ENCODE measurements at regions of chr1 and their contacts with region 1.

Region 1: DNA sequence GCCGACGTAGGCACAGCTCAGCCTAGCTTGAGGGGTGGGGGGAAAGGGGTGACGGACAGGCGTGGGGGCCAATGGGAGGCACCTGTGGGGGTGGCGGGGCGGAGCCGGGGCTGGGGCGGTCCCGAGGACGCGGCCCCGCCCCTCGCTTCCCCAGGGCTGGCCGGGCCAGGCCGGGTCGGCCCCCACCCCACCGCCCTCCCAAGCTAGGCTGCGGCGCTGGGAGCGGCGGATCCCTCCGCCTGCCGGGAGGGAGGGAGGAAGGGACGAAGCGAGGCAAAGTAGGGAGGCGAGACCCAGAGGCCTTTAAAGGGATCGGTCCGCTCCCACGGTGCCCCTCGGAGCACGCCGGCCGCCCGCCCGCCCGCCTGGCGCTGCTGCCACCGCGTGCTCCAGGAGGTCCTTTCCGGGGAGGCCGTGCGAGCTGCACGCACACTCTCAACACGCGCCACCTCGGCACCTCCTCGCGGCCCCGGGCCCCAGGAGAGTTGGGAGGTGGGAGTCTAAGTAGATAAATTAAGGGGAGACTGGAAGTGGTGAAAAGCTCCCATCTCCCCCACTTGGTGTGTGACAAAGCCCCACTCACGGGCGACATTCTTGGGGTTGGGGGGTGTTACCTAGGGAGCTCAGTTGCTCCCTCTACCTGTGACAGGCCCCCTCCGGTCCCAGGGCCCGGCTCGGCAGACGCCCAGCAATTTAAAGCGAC is 373 bp upstream of the MEF2D start:
- DNase-seq: peak; percentile 95 to 97 (median 96)
- H3K4me3 ChIP-seq: peak overlapping the region in 2 of 4 donors; percentile 97 to 99
- H3K27ac ChIP-seq: peak overlapping the region; percentile 99 to 100 (median 100)
- H3K4me1 ChIP-seq: peaks cover 73 to 74% of the 10 kb centered on the region in 2 donors
- H3K27me3 ChIP-seq: no peaks in the 10 kb centered on the region
- CTCF ChIP-seq: peak in 5 of 6 experiments; percentile 14 to 48 (median 39)
- POLR2A ChIP-seq: peak; percentile 90 to 98

Region 2: GRCh38 chr1:156136970-156137483 is 363.9 kb before region 1 on chr1:
- intact Hi-C with region 1: no loop called
- DNase-seq: peak in 1 of 7 donors; percentile 21
- H3K4me3 ChIP-seq: no peak overlapping the region
- H3K27ac ChIP-seq: no peak overlapping the region
- H3K4me1 ChIP-seq: no peaks in the 10 kb centered on the region
- H3K27me3 ChIP-seq: no peaks in the 10 kb centered on the region
- CTCF ChIP-seq: no peak
- POLR2A ChIP-seq: no peak

Region 3: GRCh38 chr1:156233426-156234127 is 267.4 kb before region 1 on chr1:
- intact Hi-C with region 1: no loop called
- DNase-seq: no peak
- H3K4me3 ChIP-seq: no peak overlapping the region
- H3K27ac ChIP-seq: no peak overlapping the region
- H3K4me1 ChIP-seq: no peaks in the 10 kb centered on the region
- H3K27me3 ChIP-seq: no peaks in the 10 kb centered on the region
- CTCF ChIP-seq: no peak
- POLR2A ChIP-seq: no peak

Region 4: DNA sequence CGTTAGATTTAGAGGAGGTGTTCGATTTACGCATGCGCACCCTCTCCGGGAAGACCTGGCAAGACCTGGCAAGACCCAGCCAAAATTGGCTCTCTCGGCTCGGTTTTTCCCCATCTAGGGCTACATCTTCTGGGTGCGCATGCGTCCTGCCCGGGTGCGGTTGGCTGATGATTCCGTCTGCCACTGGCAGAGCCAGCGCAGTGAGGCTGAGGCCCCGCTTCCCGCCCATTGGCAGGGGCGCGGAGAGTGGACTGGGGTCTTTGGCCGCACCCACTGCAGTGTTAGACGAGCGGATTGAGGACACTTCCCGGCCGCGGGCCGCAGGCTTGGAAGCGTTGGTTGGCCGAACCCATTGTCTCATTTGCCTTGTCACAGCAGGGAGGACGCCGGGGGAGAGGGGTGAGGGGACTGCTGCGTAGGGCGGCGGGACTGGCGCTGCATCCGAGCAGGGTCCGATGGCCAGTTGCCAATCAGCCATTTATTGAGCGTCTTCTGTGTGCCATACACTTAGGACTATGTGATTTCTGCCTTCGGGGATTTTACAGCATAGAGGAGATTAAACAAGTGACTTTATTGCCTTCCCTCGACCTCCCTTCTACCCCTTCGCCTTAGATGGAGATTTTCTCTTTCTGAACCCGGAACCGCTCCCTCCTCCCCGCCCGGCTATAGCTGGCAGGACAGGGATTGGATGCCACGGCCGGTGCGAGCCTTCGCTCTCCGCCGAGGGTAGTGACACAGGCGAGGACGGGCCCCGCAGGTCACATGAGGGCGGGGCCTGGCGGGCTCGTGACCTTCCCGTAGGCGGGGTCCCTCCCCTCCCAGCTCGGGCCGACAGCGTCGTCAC is 44.1 kb before region 1 on chr1:
- intact Hi-C with region 1: loop called in 1 of 2 experiments (anchors 5 kb)
- DNase-seq: peak; percentile 98 to 100 (median 99)
- H3K4me3 ChIP-seq: peak overlapping the region in 3 of 4 donors; percentile 12 to 73 (median 57)
- H3K27ac ChIP-seq: peak overlapping the region; percentile 94 to 100 (median 99)
- H3K4me1 ChIP-seq: peaks cover 11 to 14% of the 10 kb centered on the region in 2 donors
- H3K27me3 ChIP-seq: no peaks in the 10 kb centered on the region
- CTCF ChIP-seq: no peak
- POLR2A ChIP-seq: peak; percentile 91 to 95

Region 5: GRCh38 chr1:156480411-156481192 is 20.3 kb before region 1 on chr1:
- intact Hi-C with region 1: no loop called
- DNase-seq: peak in 6 of 7 donors; percentile 65 to 77 (median 70)
- H3K4me3 ChIP-seq: no peak overlapping the region
- H3K27ac ChIP-seq: peak overlapping the region in 3 of 5 donors; percentile 31 to 92 (median 88)
- H3K4me1 ChIP-seq: peaks cover 31 to 61% of the 10 kb centered on the region in 2 donors
- H3K27me3 ChIP-seq: no peaks in the 10 kb centered on the region
- CTCF ChIP-seq: peak; percentile 43 to 73 (median 62)
- POLR2A ChIP-seq: no peak

Measured in adrenal gland (tissue), 19 donors.